Sigmoid colon (tissue), 7 donors: ENCODE measurements at regions of chrX and their contacts with region 1.

Region 1: DNA sequence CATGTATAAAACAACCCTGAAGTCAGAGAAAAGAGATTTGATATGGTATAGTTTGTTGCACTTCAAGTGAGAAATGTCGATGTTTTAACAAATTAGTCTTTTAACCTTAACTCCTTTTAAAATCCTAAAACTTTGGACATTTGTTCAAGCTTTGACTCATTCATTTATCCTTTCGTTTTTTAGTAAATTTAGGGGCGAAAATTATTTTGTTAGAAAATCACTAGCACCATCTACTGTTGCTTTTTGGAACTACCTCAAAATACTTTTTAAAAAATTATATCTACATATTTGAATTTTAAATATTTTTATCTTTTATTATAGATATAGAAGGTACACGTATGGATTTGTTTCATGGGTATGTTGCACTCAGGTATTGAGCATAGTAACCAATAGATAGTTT is 165.1 kb upstream of the POF1B start:
- DNase-seq: no peak
- H3K4me3 ChIP-seq: no peak overlapping the region
- H3K27ac ChIP-seq: no peak overlapping the region
- H3K4me1 ChIP-seq: no peaks in the 10 kb centered on the region
- H3K27me3 ChIP-seq: no peaks in the 10 kb centered on the region
- CTCF ChIP-seq: peak in 1 of 4 experiments; percentile 38
- EP300 ChIP-seq: no peak
- POLR2A ChIP-seq: no peak

Region 2: GRCh38 chrX:85111347-85111746 is 433.3 kb before region 1 on chrX:
- intact Hi-C with region 1: loop called (anchors 5 kb)
- DNase-seq: no peak
- H3K4me3 ChIP-seq: no peak overlapping the region
- H3K27ac ChIP-seq: no peak overlapping the region
- H3K4me1 ChIP-seq: no peaks in the 10 kb centered on the region
- H3K27me3 ChIP-seq: no peaks in the 10 kb centered on the region
- CTCF ChIP-seq: peak in 3 of 4 experiments; percentile 12 to 43 (median 26)
- EP300 ChIP-seq: no peak
- POLR2A ChIP-seq: no peak

Region 3: GRCh38 chrX:85611926-85612325 is 67.3 kb after region 1 on chrX:
- intact Hi-C with region 1: no loop called
- DNase-seq: no peak
- H3K4me3 ChIP-seq: no peak overlapping the region
- H3K27ac ChIP-seq: no peak overlapping the region
- H3K4me1 ChIP-seq: no peaks in the 10 kb centered on the region
- H3K27me3 ChIP-seq: no peaks in the 10 kb centered on the region
- CTCF ChIP-seq: no peak
- EP300 ChIP-seq: no peak
- POLR2A ChIP-seq: no peak